CD4-positive, alpha-beta memory T cell (primary cell): ENCODE measurements at regions of chr1 and their contacts with region 1.

Region 1: DNA sequence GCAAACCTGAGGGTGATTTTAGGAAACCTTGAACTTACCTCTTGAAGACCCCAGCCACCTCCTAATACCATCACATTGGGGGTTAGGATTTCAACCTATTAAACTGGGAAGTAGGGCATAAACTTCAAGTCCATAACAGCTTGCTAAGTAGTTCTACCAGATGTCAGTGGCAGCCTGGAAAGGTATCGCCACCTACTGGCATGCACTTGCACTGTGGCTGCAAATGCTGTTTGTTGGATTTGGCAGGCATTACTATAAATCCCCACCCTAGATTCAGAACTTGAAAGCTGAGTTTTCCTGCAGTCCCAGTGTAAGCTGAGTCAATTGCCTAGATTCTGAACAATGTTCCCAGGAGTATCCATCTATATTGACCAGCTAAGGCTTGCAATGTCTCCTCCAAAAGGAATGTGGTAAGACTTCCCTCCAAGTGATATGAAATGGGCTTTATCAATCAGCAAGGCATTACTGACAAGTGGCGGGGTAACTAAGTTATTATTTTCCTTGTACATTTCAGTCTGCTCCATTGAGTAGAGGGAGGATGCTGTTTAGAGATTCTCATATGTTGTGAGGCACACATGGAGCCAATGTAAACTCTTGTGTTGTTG is 474.5 kb downstream of the PTPRC start:
- DNase-seq: peak; percentile 45 to 54 (median 48)
- H3K4me3 ChIP-seq: no peak overlapping the region
- H3K4me3 Mint-ChIP-seq: no peak overlapping the region
- H3K27ac ChIP-seq: no peak overlapping the region
- H3K27ac Mint-ChIP-seq: peak overlapping the region in 1 of 7 donors; percentile 14
- H3K4me1 ChIP-seq: no peaks in the 10 kb centered on the region
- H3K4me1 Mint-ChIP-seq: peaks cover 2 to 7% (median 4%) of the 10 kb centered on the region in 4 donors
- H3K27me3 ChIP-seq: no peaks in the 10 kb centered on the region
- H3K27me3 Mint-ChIP-seq: no peaks in the 10 kb centered on the region

Region 2: DNA sequence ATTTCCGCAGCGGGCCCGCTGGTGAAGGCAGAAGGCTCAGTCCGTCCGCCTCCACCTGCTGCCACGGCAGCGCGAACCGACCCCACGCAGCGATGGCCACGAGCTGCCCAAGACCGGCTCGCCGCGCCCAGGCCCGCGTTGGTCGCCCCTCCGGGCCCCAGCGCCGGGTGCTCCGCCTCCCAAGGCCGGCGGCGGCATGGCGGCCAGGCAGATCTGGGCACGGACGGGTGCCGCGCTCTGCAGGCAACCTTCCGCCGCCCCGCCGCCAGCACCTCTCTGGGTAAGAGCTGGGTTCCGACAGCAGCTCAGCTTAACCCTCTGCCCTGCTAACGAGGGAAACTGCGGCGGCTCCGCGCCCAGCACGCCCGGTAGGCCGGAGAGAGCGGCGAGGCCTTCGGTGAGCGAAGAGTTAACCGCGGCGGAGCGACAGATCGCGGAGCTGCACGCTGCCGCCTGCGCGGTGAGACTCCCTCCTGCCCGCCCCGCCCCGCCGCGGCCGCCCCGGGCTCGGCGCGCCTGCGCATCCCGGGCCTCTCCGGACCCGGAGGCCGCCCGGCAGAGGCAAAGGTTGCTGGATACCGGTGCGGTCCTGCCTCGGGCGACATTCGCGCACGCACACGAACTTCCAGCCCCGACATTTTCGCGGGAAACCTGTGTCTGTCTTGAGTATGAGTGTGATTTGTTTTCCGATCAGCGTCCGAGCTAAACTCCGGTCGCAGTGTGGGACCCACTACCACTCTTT is 1210.7 kb before region 1 on chr1 and contains the start of gene C1orf53:
- CTCF ChIA-PET with region 1: no interaction called
- POLR2A ChIA-PET with region 1: no interaction called
- intact Hi-C with region 1: no loop called
- DNase-seq: peak; percentile 71 to 85 (median 76)
- H3K4me3 ChIP-seq: peak within 1 kb of the TSS; percentile 26 to 75
- H3K4me3 Mint-ChIP-seq: peak within 1 kb of the TSS; percentile 87 to 93 (median 90)
- H3K27ac ChIP-seq: peak within 1 kb of the TSS; percentile 44
- H3K27ac Mint-ChIP-seq: peak within 1 kb of the TSS; percentile 30 to 85 (median 82)
- H3K4me1 ChIP-seq: peaks cover 15% of the 10 kb centered on the region
- H3K4me1 Mint-ChIP-seq: peaks cover 2 to 18% (median 12%) of the 10 kb centered on the region in 4 donors
- H3K27me3 ChIP-seq: peaks cover 43% of the 10 kb centered on the region
- H3K27me3 Mint-ChIP-seq: peaks cover 28 to 48% of the 10 kb centered on the region in 2 donors
- total RNA-seq, gene C1orf53: not detected

Region 3: DNA sequence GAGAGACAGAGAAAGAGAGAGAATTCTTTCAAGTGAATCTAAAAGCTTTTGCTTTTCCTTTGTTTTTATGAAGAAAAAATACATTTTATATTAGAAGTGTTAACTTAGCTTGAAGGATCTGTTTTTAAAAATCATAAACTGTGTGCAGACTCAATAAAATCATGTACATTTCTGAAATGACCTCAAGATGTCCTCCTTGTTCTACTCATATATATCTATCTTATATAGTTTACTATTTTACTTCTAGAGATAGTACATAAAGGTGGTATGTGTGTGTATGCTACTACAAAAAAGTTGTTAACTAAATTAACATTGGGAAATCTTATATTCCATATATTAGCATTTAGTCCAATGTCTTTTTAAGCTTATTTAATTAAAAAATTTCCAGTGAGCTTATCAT is 356.9 kb before region 1 on chr1:
- CTCF ChIA-PET with region 1: interaction called, 13 read pairs
- POLR2A ChIA-PET with region 1: interaction called, 3 read pairs
- intact Hi-C with region 1: loop called (anchors 1 kb)
- DNase-seq: no peak
- H3K4me3 ChIP-seq: no peak overlapping the region
- H3K4me3 Mint-ChIP-seq: no peak overlapping the region
- H3K27ac ChIP-seq: no peak overlapping the region
- H3K27ac Mint-ChIP-seq: peak overlapping the region in 2 of 7 donors; percentile 59 to 70
- H3K4me1 ChIP-seq: peaks cover 11% of the 10 kb centered on the region
- H3K4me1 Mint-ChIP-seq: peaks cover 8 to 26% (median 20%) of the 10 kb centered on the region in 4 donors
- H3K27me3 ChIP-seq: no peaks in the 10 kb centered on the region
- H3K27me3 Mint-ChIP-seq: no peaks in the 10 kb centered on the region

Region 4: GRCh38 chr1:198771563-198772153 is 341.7 kb before region 1 on chr1:
- CTCF ChIA-PET with region 1: interaction called, 9 read pairs
- POLR2A ChIA-PET with region 1: no interaction called
- intact Hi-C with region 1: loop called (anchors 1 kb)
- DNase-seq: no peak
- H3K4me3 ChIP-seq: no peak overlapping the region
- H3K4me3 Mint-ChIP-seq: no peak overlapping the region
- H3K27ac ChIP-seq: no peak overlapping the region
- H3K27ac Mint-ChIP-seq: no peak overlapping the region
- H3K4me1 ChIP-seq: no peaks in the 10 kb centered on the region
- H3K4me1 Mint-ChIP-seq: peaks cover 0 to 1% (median 0%) of the 10 kb centered on the region in 4 donors
- H3K27me3 ChIP-seq: no peaks in the 10 kb centered on the region
- H3K27me3 Mint-ChIP-seq: peaks cover 0 to 6% of the 10 kb centered on the region in 2 donors

Region 5: DNA sequence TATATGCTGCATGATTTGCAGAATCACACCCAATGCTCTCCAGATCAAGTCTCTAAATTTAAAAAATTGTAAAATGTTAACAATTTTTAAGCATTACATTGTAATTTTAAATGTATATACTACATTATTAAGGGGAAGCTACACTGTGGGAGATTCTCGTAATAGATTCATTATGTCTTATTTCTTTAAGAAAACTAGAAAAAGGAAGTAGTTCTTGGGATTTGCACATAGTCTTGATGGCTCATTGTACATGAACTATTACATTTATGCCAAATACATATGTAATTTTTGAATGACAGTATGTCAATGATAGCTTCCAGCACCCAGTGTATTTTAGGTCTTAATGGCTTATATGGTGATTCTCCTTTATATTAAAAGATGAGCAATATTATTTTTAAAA is 224.3 kb before region 1 on chr1:
- CTCF ChIA-PET with region 1: interaction called, 7 read pairs
- POLR2A ChIA-PET with region 1: no interaction called
- intact Hi-C with region 1: loop called (anchors 5 kb)
- DNase-seq: no peak
- H3K4me3 ChIP-seq: no peak overlapping the region
- H3K4me3 Mint-ChIP-seq: no peak overlapping the region
- H3K27ac ChIP-seq: no peak overlapping the region
- H3K27ac Mint-ChIP-seq: no peak overlapping the region
- H3K4me1 ChIP-seq: no peaks in the 10 kb centered on the region
- H3K4me1 Mint-ChIP-seq: peaks cover 0 to 3% (median 0%) of the 10 kb centered on the region in 4 donors
- H3K27me3 ChIP-seq: no peaks in the 10 kb centered on the region
- H3K27me3 Mint-ChIP-seq: no peaks in the 10 kb centered on the region

Region 6: DNA sequence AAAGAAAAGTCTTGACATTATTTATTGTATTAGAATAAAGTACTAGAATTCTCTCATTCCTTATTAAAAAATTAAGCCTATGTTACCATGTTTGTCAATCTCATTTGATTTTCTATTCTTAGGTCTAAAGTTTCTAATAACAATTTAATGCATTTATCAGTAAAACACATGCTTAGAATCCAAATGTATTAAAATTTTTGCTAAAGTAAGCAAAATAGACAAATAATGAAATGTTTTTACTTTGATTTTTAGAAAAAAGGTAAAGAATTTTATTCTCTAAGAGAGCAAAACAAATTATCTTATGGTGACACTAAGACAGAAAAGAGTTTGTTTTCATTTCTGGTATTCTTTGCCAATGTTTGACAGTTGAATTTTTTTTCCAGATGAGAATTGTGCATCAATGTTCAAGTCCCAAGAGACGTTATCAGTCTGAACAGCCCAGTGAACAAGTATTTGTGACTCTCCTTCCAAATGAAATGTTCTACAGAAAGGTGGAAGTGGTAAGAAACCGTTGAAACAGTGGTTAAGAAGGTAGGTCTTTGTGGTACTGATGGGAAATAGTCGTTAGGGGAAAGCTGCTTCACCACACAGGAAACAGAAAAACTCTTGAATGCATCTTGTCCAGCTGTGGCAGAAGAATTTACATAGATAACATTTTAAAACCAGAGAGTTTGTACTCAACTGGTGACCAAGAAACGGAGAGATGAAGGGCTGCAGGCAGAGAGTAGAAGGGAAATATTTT is 72.0 kb before region 1 on chr1:
- CTCF ChIA-PET with region 1: no interaction called
- POLR2A ChIA-PET with region 1: no interaction called
- intact Hi-C with region 1: no loop called
- DNase-seq: peak in 4 of 5 donors; percentile 15 to 39 (median 30)
- H3K4me3 ChIP-seq: no peak overlapping the region
- H3K4me3 Mint-ChIP-seq: peak overlapping the region in 7 of 8 donors; percentile 5 to 78 (median 62)
- H3K27ac ChIP-seq: no peak overlapping the region
- H3K27ac Mint-ChIP-seq: no peak overlapping the region
- H3K4me1 ChIP-seq: peaks cover 28% of the 10 kb centered on the region
- H3K4me1 Mint-ChIP-seq: peaks cover 19 to 23% (median 19%) of the 10 kb centered on the region in 4 donors
- H3K27me3 ChIP-seq: no peaks in the 10 kb centered on the region
- H3K27me3 Mint-ChIP-seq: no peaks in the 10 kb centered on the region

Region 7: DNA sequence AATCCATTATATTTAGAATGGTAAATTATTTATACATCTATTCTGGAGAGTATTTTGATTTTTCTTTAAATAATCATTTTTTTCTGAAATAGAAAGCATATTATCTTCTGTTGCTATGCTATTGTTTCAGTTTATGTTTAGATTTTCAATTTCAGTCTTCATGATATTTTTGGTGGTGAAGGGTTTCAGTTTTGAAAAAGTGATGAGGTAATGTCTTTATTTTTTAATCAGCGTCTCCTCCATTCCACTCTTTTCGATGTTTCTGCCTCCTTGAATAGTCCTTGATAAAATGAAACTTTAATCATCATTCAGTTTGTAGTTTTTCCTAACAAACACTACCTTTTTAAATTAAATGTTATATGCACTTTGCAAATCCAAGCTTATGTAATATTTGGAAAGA is 45.9 kb before region 1 on chr1:
- CTCF ChIA-PET with region 1: no interaction called
- POLR2A ChIA-PET with region 1: no interaction called
- intact Hi-C with region 1: no loop called
- DNase-seq: no peak
- H3K4me3 ChIP-seq: no peak overlapping the region
- H3K4me3 Mint-ChIP-seq: no peak overlapping the region
- H3K27ac ChIP-seq: no peak overlapping the region
- H3K27ac Mint-ChIP-seq: no peak overlapping the region
- H3K4me1 ChIP-seq: no peaks in the 10 kb centered on the region
- H3K4me1 Mint-ChIP-seq: peaks cover 0 to 3% (median 0%) of the 10 kb centered on the region in 4 donors
- H3K27me3 ChIP-seq: no peaks in the 10 kb centered on the region
- H3K27me3 Mint-ChIP-seq: peaks cover 0 to 2% of the 10 kb centered on the region in 2 donors

Region 8: DNA sequence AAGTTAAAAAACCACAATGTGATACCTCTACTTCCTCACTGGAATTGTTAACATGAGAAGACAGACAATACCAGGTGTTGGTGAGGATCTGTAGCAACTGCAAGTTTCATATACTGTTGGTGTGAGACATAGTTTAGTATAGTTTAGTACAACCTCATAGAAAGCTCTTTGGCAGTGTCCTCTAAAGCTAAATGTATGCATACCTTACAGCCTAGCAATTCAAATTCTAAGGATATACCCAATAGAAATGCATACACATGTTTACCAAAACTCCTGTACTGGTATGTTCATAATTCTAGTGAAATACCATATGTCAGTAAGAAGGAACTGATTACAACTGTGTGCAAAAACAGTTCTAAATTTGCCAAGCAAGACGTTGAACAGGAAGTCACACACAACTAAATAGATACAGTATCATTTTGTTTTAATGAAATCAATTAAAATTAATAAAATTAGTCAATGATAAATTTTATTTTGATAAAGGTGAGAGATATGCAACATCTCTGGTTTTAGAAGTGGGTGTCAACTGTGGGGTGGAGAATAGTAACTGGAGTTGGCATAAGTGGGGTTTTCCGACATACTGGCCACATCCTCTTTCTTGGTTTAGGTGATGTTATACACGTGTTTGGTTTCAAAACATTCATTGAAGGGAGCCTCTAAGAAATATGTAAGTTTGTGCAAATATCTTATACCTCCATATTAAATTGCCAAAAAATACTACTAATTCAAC is 23.8 kb before region 1 on chr1:
- CTCF ChIA-PET with region 1: no interaction called
- POLR2A ChIA-PET with region 1: no interaction called
- intact Hi-C with region 1: no loop called
- DNase-seq: peak; percentile 51 to 73 (median 64)
- H3K4me3 ChIP-seq: no peak overlapping the region
- H3K4me3 Mint-ChIP-seq: peak overlapping the region in 3 of 8 donors; percentile 40 to 67 (median 53)
- H3K27ac ChIP-seq: no peak overlapping the region
- H3K27ac Mint-ChIP-seq: peak overlapping the region in 1 of 7 donors; percentile 42
- H3K4me1 ChIP-seq: peaks cover 22% of the 10 kb centered on the region
- H3K4me1 Mint-ChIP-seq: peaks cover 13 to 19% (median 18%) of the 10 kb centered on the region in 4 donors
- H3K27me3 ChIP-seq: no peaks in the 10 kb centered on the region
- H3K27me3 Mint-ChIP-seq: no peaks in the 10 kb centered on the region

Region 9: DNA sequence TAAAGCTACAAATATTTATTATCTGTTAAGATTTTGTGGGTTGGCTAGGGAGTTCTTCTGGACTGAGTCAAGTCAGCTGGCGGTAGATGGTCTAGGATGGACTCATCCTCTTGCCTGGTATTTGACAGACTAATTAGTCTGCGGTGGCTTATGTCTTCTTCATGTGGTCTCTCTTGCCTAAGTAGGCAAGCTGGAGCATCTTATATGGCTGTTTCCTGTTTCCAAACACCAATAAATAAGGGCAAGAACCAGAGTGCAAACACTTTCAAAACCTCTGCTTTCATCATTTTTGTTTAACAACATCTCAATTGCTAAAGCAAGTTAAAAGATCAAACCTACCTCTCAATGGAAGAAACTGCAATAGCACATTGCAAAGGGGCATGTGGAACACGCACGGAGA is 10.2 kb after region 1 on chr1:
- CTCF ChIA-PET with region 1: interaction called, 16 read pairs
- POLR2A ChIA-PET with region 1: no interaction called
- intact Hi-C with region 1: no loop called
- DNase-seq: no peak
- H3K4me3 ChIP-seq: no peak overlapping the region
- H3K4me3 Mint-ChIP-seq: no peak overlapping the region
- H3K27ac ChIP-seq: no peak overlapping the region
- H3K27ac Mint-ChIP-seq: no peak overlapping the region
- H3K4me1 ChIP-seq: no peaks in the 10 kb centered on the region
- H3K4me1 Mint-ChIP-seq: peaks cover 0 to 3% (median 2%) of the 10 kb centered on the region in 4 donors
- H3K27me3 ChIP-seq: no peaks in the 10 kb centered on the region
- H3K27me3 Mint-ChIP-seq: peaks cover 0 to 2% of the 10 kb centered on the region in 2 donors